CD14-positive monocyte (primary cell): ENCODE measurements at regions of chr12 and their contacts with region 1.

Region 1: DNA sequence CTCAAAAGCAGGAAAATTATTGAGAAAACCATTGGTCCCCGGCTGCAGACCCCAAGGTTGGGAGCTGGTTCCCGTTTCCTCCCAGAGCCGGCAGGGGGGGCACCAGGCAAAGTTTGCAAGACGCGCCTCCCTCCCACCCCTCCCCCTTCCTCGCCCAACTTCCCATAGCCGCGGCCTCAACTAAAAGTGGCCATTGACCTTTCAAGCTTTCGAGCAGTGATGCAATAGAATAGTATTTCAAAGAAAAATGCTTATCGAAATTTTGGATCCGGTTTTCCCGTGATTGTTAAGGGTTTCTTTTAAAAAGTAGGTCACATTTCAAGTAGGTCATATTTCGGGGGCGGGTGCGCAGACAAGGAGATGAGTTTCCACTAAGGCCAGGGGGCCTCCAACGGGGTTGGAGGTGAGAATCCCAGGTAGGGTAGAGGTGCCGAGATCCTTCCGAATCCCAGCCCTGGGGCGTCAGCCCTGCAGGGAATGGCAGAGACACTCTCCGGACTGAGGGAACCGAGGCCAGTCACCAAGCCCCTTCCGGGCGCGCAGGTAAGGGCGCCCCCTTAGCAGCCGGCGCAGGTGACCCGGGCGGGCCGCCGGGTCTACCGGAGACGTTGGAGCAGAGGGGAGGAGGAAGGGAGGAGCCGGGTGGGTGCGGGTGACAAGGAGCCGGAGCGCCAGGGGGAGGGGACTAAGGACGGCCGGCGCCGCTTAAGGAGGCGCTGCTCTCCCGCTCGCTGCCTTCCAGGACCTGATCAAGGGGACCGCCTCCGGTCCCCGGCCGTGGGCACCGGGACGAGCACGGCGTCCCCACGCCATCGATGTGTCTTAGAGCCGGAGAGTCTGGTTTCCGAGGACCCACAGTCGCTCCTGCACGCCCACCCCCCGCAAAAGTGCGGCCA is 2.6 kb upstream of the SOCS2 start:
- DNase-seq: peak; percentile 69 to 81 (median 76)
- H3K4me3 ChIP-seq: peak overlapping the region; percentile 37 to 79 (median 54)
- H3K4me3 Mint-ChIP-seq: peak overlapping the region; percentile 81 to 93
- H3K27ac ChIP-seq: no peak overlapping the region
- H3K27ac Mint-ChIP-seq: peak overlapping the region in 3 of 7 donors; percentile 33 to 86 (median 53)
- H3K4me1 ChIP-seq: peaks cover 35 to 43% of the 10 kb centered on the region in 2 donors
- H3K4me1 Mint-ChIP-seq: peaks cover 31% of the 10 kb centered on the region
- H3K27me3 ChIP-seq: peaks cover 37 to 63% of the 10 kb centered on the region in 2 donors
- H3K27me3 Mint-ChIP-seq: peaks cover 56 to 76% (median 64%) of the 10 kb centered on the region in 3 donors
- CTCF ChIP-seq: peak; percentile 74

Region 2: GRCh38 chr12:93682846-93683261 is 113.0 kb after region 1 on chr12:
- intact Hi-C with region 1: loop called (anchors 5 kb)
- DNase-seq: no peak
- H3K4me3 ChIP-seq: no peak overlapping the region
- H3K4me3 Mint-ChIP-seq: no peak overlapping the region
- H3K27ac ChIP-seq: no peak overlapping the region
- H3K27ac Mint-ChIP-seq: no peak overlapping the region
- H3K4me1 ChIP-seq: peaks cover 6 to 7% of the 10 kb centered on the region in 2 donors
- H3K4me1 Mint-ChIP-seq: peaks cover 18% of the 10 kb centered on the region
- H3K27me3 ChIP-seq: no peaks in the 10 kb centered on the region
- H3K27me3 Mint-ChIP-seq: peaks cover 0 to 4% (median 0%) of the 10 kb centered on the region in 3 donors
- CTCF ChIP-seq: no peak

Region 3: GRCh38 chr12:93742110-93742934 is 172.4 kb after region 1 on chr12:
- intact Hi-C with region 1: loop called in 1 of 2 experiments (anchors 10 kb)
- DNase-seq: peak; percentile 15 to 49 (median 38)
- H3K4me3 ChIP-seq: peak overlapping the region; percentile 89 to 95 (median 89)
- H3K4me3 Mint-ChIP-seq: peak overlapping the region; percentile 96 to 99
- H3K27ac ChIP-seq: peak overlapping the region in 1 of 2 donors; percentile 47
- H3K27ac Mint-ChIP-seq: peak overlapping the region in 6 of 7 donors; percentile 61 to 76 (median 66)
- H3K4me1 ChIP-seq: peaks cover 11 to 17% of the 10 kb centered on the region in 2 donors
- H3K4me1 Mint-ChIP-seq: peaks cover 38% of the 10 kb centered on the region
- H3K27me3 ChIP-seq: peaks cover 0 to 4% of the 10 kb centered on the region in 2 donors
- H3K27me3 Mint-ChIP-seq: peaks cover 2 to 15% (median 5%) of the 10 kb centered on the region in 3 donors
- CTCF ChIP-seq: no peak

Region 4: DNA sequence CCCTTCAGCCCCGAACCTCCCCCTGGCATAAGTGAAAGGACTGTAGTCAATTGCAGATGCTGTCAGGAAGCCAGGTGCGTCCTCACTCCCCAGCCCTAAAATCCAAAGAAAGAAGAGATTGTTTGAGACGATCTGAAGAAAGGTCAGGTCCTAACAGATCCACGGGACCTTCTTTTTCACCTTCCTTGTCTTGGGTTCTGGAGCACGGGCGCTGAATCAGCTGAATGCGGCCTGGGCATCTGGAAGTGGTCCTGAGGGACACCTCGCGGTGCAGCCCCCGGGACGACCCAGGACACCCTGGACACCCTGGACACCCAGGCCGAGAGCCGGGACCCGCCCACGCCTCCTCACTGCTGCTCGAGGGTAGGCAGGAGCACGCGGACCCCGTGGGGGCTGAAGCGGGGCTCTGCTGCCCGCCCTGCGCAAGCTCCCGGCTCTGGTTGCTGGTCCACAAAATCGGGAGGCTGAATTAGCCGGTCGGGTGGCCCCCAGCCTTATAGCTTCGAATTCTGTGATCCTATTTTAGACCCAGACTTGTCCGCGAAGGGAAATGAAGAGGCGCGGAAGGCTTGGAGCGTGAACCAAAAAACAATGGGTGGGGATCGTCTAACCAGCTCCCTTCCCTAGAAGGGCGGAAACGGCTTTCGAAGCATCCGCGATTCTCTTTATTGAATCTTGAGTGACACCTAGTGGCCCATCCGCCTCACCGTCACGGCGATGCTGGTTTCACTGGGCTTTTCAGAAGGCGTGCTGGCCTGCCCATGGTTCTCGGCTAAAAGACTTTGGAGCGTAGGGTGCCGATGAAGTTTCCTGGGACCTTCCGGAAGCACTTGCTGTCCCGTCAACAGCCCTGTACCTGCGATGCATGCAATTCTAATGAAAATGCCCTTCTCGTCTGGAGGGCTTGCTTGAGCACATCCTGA is 532.1 kb after region 1 on chr12:
- intact Hi-C with region 1: loop called (anchors 2 to 5 kb)
- DNase-seq: peak; percentile 76 to 88 (median 78)
- H3K4me3 ChIP-seq: peak overlapping the region; percentile 14 to 84 (median 54)
- H3K4me3 Mint-ChIP-seq: peak overlapping the region; percentile 76 to 86
- H3K27ac ChIP-seq: no peak overlapping the region
- H3K27ac Mint-ChIP-seq: peak overlapping the region in 3 of 7 donors; percentile 26 to 66 (median 44)
- H3K4me1 ChIP-seq: peaks cover 16 to 18% of the 10 kb centered on the region in 2 donors
- H3K4me1 Mint-ChIP-seq: peaks cover 20% of the 10 kb centered on the region
- H3K27me3 ChIP-seq: peaks cover 14 to 34% of the 10 kb centered on the region in 2 donors
- H3K27me3 Mint-ChIP-seq: peaks cover 26 to 44% (median 32%) of the 10 kb centered on the region in 3 donors
- CTCF ChIP-seq: peak; percentile 76